ENCODE measurements at regions of chr1 and their contacts with region 1.

Region 1: GRCh38 chr1:164131949-164132348 is 427.0 kb upstream of the PBX1 start:
- DNase-seq: no peak
- ATAC-seq: no peak
- H3K4me3 ChIP-seq: no peak overlapping the region
- H3K27ac ChIP-seq: no peak overlapping the region
- H3K4me1 ChIP-seq: no peaks in the 10 kb centered on the region
- H3K27me3 ChIP-seq: no peaks in the 10 kb centered on the region
- CTCF ChIP-seq: no peak
- POLR2A ChIP-seq: no peak
- RAD21 ChIP-seq: no peak

Region 2: GRCh38 chr1:163367721-163368120 is 764.2 kb before region 1 on chr1:
- CTCF ChIA-PET with region 1: no interaction called
- POLR2A ChIA-PET with region 1: no interaction called
- dilution Hi-C with region 1: no loop called
- in situ Hi-C with region 1: no loop called
- intact Hi-C with region 1: no loop called
- DNase-seq: no peak
- ATAC-seq: no peak
- H3K4me3 ChIP-seq: no peak overlapping the region
- H3K27ac ChIP-seq: no peak overlapping the region
- H3K4me1 ChIP-seq: no peaks in the 10 kb centered on the region
- H3K27me3 ChIP-seq: peaks cover 12% of the 10 kb centered on the region
- CTCF ChIP-seq: no peak
- POLR2A ChIP-seq: no peak
- RAD21 ChIP-seq: no peak

Region 3: GRCh38 chr1:164087906-164088453 is 44.0 kb before region 1 on chr1:
- CTCF ChIA-PET with region 1: no interaction called
- POLR2A ChIA-PET with region 1: no interaction called
- dilution Hi-C with region 1: no loop called
- in situ Hi-C with region 1: no loop called
- intact Hi-C with region 1: loop called (anchors 1 kb)
- DNase-seq: no peak
- ATAC-seq: no peak
- H3K4me3 ChIP-seq: no peak overlapping the region
- H3K27ac ChIP-seq: no peak overlapping the region
- H3K4me1 ChIP-seq: no peaks in the 10 kb centered on the region
- H3K27me3 ChIP-seq: no peaks in the 10 kb centered on the region
- CTCF ChIP-seq: no peak
- POLR2A ChIP-seq: no peak
- RAD21 ChIP-seq: no peak